ENCODE measurements at regions of chr5 and their contacts with region 1.

Region 1: GRCh38 chr5:61331407-61332357 is at the start of gene ZSWIM6:
- DNase-seq: peak; percentile 99 to 100 (median 100)
- H3K4me3 ChIP-seq: peak within 1 kb of the TSS; percentile 79 to 95 (median 89)
- H3K27ac ChIP-seq: peak within 1 kb of the TSS in 1 of 2 experiments; percentile 80
- H3K4me1 ChIP-seq: peaks cover 10 to 43% (median 26%) of the 10 kb centered on the region in 4 experiments
- H3K27me3 ChIP-seq: no peaks in the 10 kb centered on the region

Region 2: DNA sequence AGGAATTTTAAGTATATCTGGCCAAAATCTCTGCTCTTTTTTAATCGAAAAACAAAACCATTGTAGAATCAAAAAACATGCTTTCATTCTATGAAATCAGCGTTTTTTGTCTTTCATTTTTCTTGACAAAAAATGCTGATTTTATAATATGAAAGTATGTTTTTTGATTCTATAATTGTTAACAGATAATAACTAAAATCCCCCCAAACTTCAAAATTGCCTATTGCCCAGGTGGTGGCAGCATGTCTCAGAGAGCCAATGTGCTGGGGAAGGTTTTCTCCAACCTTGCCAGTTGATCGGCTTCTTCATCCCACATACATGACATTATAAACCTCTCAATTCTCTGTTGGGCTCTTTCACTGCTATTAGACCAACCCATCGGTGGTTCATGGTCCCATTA is 164.3 kb before region 1 on chr5:
- CTCF ChIA-PET with region 1: interaction called, 23 read pairs
- POLR2A ChIA-PET with region 1: interaction called, 8 read pairs
- DNase-seq: peak; percentile 53 to 73 (median 72)
- H3K4me3 ChIP-seq: no peak overlapping the region
- H3K27ac ChIP-seq: no peak overlapping the region
- H3K4me1 ChIP-seq: peaks cover 0 to 8% (median 6%) of the 10 kb centered on the region in 4 experiments
- H3K27me3 ChIP-seq: no peaks in the 10 kb centered on the region

Region 3: DNA sequence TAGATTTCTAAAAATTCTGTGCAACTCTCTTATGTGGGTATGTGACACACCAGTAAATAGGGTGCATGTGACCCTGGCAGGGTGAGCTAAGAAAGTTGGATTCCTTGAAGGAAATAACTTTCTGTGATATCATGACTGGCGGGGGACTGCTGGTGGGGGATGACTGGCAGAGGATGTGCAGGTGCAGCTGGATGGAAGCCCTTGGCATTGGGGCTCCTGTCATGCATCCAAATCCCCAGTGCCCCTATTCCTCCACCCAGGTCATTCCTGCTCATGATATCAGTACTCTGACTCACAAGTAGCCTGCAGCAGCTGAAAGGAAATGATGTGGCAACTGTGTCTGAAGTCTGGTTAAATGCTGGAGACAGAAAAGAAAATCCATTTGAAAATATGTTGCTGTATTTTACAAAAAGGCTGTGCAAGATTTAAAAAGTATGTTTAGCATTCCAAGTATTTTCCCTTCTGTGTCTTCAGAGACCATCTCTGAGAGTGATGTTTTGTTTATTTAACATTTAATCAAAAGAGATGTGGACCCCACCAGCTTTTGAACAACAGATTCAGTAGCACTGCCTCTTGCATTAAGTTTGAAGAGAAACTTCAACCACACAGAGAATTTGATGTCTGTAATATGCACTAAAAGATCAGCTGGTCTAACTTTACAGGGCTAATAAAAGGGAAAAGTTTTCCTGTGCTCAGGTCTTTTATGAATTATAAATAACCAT is 17.6 kb before region 1 on chr5:
- CTCF ChIA-PET with region 1: interaction called, 14 read pairs
- POLR2A ChIA-PET with region 1: interaction called, 15 read pairs
- DNase-seq: peak; percentile 74 to 96 (median 93)
- H3K4me3 ChIP-seq: peak overlapping the region in 1 of 7 experiments; percentile 0
- H3K27ac ChIP-seq: peak overlapping the region in 1 of 2 experiments; percentile 65
- H3K4me1 ChIP-seq: peaks cover 9 to 27% (median 16%) of the 10 kb centered on the region in 4 experiments
- H3K27me3 ChIP-seq: no peaks in the 10 kb centered on the region

Region 4: GRCh38 chr5:61344187-61344944 is 12.7 kb after region 1 on chr5:
- CTCF ChIA-PET with region 1: interaction called, 11 read pairs
- POLR2A ChIA-PET with region 1: interaction called, 5 read pairs
- DNase-seq: no peak
- H3K4me3 ChIP-seq: no peak overlapping the region
- H3K27ac ChIP-seq: no peak overlapping the region
- H3K4me1 ChIP-seq: peaks cover 0 to 5% (median 2%) of the 10 kb centered on the region in 4 experiments
- H3K27me3 ChIP-seq: no peaks in the 10 kb centered on the region

Region 5: GRCh38 chr5:61440596-61440995 is 108.9 kb after region 1 on chr5:
- CTCF ChIA-PET with region 1: no interaction called
- POLR2A ChIA-PET with region 1: no interaction called
- DNase-seq: no peak
- H3K4me3 ChIP-seq: no peak overlapping the region
- H3K27ac ChIP-seq: no peak overlapping the region
- H3K4me1 ChIP-seq: no peaks in the 10 kb centered on the region
- H3K27me3 ChIP-seq: no peaks in the 10 kb centered on the region

Region 6: DNA sequence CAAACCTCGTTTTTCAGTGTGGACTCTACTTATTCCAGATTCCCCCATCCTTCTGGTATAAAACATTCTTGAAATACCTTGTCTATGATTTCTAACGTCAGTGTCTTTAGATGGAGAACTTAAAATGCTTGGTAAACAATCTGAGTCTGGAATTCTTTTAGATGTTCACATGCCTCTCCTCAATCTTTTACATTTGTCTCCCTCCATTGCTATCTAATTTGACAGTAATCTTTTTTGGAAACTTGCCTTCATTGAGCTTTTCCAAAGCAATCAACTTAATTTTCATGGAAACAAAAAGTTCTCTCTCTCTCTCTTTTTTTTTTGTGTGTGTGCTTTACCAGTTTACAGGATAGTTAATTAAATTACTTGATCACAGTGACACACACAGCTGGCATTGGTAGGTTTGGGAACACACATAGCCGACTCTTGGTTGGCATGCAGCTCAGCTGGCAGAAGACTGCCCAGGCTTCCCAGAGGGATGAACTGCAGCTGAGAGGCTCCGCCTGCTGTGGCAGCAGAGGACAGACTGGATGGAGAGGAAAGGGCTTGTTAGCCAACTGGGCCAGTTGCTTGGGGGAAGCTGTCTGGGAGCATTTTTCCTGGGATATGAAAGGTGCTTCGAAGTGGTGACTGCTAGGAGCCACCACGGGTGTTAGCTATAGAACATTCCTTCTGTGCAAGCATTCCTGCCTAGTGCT is 271.7 kb after region 1 on chr5:
- CTCF ChIA-PET with region 1: no interaction called
- POLR2A ChIA-PET with region 1: no interaction called
- DNase-seq: no peak
- H3K4me3 ChIP-seq: no peak overlapping the region
- H3K27ac ChIP-seq: no peak overlapping the region
- H3K4me1 ChIP-seq: peaks cover 0 to 9% (median 5%) of the 10 kb centered on the region in 4 experiments
- H3K27me3 ChIP-seq: no peaks in the 10 kb centered on the region